ENCODE measurements at regions of chr14 and their contacts with region 1.

Region 1: GRCh38 chr14:30998100-30998706 is 27.2 kb upstream of the AP4S1 start:
- DNase-seq: no peak
- H3K4me3 ChIP-seq: no peak overlapping the region
- H3K4me3 Mint-ChIP-seq: no peak overlapping the region
- H3K27ac Mint-ChIP-seq: no peak overlapping the region
- H3K4me1 ChIP-seq: no peaks in the 10 kb centered on the region
- H3K4me1 Mint-ChIP-seq: no peaks in the 10 kb centered on the region
- H3K27me3 ChIP-seq: no peaks in the 10 kb centered on the region
- H3K27me3 Mint-ChIP-seq: no peaks in the 10 kb centered on the region
- CTCF ChIP-seq: no peak

Region 2: DNA sequence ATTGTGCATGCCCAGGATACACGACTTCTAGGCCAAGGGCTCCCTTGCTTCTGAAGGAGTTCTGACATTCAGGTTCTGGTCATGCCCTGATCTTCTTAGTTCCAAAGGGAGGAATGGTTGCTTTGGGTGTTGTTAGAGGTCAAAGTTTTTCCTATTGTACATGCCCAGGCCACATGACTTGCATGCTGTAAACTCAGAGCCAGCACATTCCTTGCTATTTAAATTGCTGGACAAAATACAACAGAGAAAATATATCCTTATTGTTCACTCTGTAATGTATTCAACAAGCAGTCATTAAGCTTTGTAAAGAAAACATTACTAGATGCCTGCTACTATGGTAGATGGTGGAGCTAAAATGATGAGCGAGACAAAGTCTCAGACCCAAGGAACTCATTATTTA is 195.0 kb before region 1 on chr14:
- CTCF ChIA-PET with region 1: no interaction called
- POLR2A ChIA-PET with region 1: interaction called, 13 read pairs
- intact Hi-C with region 1: no loop called
- DNase-seq: no peak
- H3K4me3 ChIP-seq: no peak overlapping the region
- H3K4me3 Mint-ChIP-seq: no peak overlapping the region
- H3K27ac Mint-ChIP-seq: no peak overlapping the region
- H3K4me1 ChIP-seq: no peaks in the 10 kb centered on the region
- H3K4me1 Mint-ChIP-seq: peaks cover 10% of the 10 kb centered on the region
- H3K27me3 ChIP-seq: no peaks in the 10 kb centered on the region
- H3K27me3 Mint-ChIP-seq: no peaks in the 10 kb centered on the region
- CTCF ChIP-seq: no peak

Region 3: GRCh38 chr14:30861200-30861599 is 137.0 kb before region 1 on chr14:
- CTCF ChIA-PET with region 1: no interaction called
- POLR2A ChIA-PET with region 1: no interaction called
- intact Hi-C with region 1: no loop called
- DNase-seq: no peak
- H3K4me3 ChIP-seq: no peak overlapping the region
- H3K4me3 Mint-ChIP-seq: no peak overlapping the region
- H3K27ac Mint-ChIP-seq: no peak overlapping the region
- H3K4me1 ChIP-seq: no peaks in the 10 kb centered on the region
- H3K4me1 Mint-ChIP-seq: no peaks in the 10 kb centered on the region
- H3K27me3 ChIP-seq: no peaks in the 10 kb centered on the region
- H3K27me3 Mint-ChIP-seq: peaks cover 13% of the 10 kb centered on the region
- CTCF ChIP-seq: no peak

Region 4: GRCh38 chr14:31018056-31018645 is 19.9 kb after region 1 on chr14:
- CTCF ChIA-PET with region 1: no interaction called
- POLR2A ChIA-PET with region 1: no interaction called
- intact Hi-C with region 1: no loop called
- DNase-seq: no peak
- H3K4me3 ChIP-seq: no peak overlapping the region
- H3K4me3 Mint-ChIP-seq: no peak overlapping the region
- H3K27ac Mint-ChIP-seq: no peak overlapping the region
- H3K4me1 ChIP-seq: no peaks in the 10 kb centered on the region
- H3K4me1 Mint-ChIP-seq: no peaks in the 10 kb centered on the region
- H3K27me3 ChIP-seq: no peaks in the 10 kb centered on the region
- H3K27me3 Mint-ChIP-seq: no peaks in the 10 kb centered on the region
- CTCF ChIP-seq: no peak

Measured in Caco-2 (cell line).